Activated T-helper 1 cell treated with anti-CD3 and anti-CD28 coated beads, Interleukin-12 subunit alpha, Interleukin-12 subunit beta, Interleukin-2, Interleukin-4 antibody, amounts not matched to agents 30 ng/mL and 10 ng/mL and 1 ng/mL, durations not matched to agents 14 hours and 24 hours and 36 hours (primary cell): ENCODE measurements at regions of chr10 and their contacts with region 1.

Region 1: DNA sequence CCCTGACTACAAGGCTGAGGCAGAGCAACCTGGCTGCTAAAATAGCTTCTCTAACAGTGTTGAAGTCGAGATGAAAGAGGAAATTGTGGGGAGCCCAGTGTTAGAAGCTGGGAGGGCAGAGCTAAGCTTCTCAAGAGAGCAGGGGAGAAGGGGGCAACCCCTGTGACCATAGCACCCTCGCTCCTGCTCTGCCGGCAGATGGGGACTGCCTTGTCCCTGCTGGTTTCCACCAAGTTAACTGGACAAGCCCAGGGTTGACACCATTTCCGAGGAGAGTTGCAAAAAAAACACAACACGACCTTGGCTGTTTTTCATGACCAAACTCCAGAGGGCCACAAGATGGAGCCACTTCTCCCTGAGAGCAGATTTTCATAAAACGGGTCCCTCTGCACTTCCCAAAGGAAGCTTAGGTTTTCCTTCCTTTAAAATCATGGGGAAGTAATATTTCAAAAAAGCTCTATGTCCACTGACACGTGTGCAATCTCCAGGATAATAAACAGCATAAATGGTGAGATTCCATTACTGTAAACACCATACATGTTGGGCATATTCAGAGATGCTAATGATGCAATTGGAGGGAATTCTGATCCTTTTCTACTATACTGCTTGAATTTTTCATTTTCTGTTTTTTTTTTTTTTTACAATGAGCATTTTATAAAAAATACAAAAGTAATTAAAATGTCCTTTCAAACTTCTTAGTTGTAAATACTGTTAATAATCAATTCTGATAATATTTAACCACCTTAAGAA is 140.4 kb downstream of the PIP4K2A start:
- DNase-seq: no peak
- H3K4me3 Mint-ChIP-seq: no peak overlapping the region
- H3K27ac Mint-ChIP-seq: peak overlapping the region; percentile 44
- H3K4me1 Mint-ChIP-seq: peaks cover 46% of the 10 kb centered on the region
- H3K27me3 Mint-ChIP-seq: no peaks in the 10 kb centered on the region

Region 2: GRCh38 chr10:22054961-22055360 is 519.0 kb before region 1 on chr10:
- intact Hi-C with region 1: no loop called
- DNase-seq: no peak
- H3K4me3 Mint-ChIP-seq: no peak overlapping the region
- H3K27ac Mint-ChIP-seq: no peak overlapping the region
- H3K4me1 Mint-ChIP-seq: no peaks in the 10 kb centered on the region
- H3K27me3 Mint-ChIP-seq: no peaks in the 10 kb centered on the region

Region 3: GRCh38 chr10:22228943-22229801 is 344.8 kb before region 1 on chr10:
- intact Hi-C with region 1: loop called (anchors 5 kb)
- DNase-seq: peak; percentile 77
- H3K4me3 Mint-ChIP-seq: peak overlapping the region; percentile 92
- H3K27ac Mint-ChIP-seq: peak overlapping the region; percentile 98
- H3K4me1 Mint-ChIP-seq: peaks cover 32% of the 10 kb centered on the region
- H3K27me3 Mint-ChIP-seq: peaks cover 11% of the 10 kb centered on the region

Region 4: GRCh38 chr10:22369434-22370072 is 204.4 kb before region 1 on chr10:
- intact Hi-C with region 1: loop called (anchors 2 kb)
- DNase-seq: no peak
- H3K4me3 Mint-ChIP-seq: no peak overlapping the region
- H3K27ac Mint-ChIP-seq: no peak overlapping the region
- H3K4me1 Mint-ChIP-seq: peaks cover 50% of the 10 kb centered on the region
- H3K27me3 Mint-ChIP-seq: no peaks in the 10 kb centered on the region

Region 5: DNA sequence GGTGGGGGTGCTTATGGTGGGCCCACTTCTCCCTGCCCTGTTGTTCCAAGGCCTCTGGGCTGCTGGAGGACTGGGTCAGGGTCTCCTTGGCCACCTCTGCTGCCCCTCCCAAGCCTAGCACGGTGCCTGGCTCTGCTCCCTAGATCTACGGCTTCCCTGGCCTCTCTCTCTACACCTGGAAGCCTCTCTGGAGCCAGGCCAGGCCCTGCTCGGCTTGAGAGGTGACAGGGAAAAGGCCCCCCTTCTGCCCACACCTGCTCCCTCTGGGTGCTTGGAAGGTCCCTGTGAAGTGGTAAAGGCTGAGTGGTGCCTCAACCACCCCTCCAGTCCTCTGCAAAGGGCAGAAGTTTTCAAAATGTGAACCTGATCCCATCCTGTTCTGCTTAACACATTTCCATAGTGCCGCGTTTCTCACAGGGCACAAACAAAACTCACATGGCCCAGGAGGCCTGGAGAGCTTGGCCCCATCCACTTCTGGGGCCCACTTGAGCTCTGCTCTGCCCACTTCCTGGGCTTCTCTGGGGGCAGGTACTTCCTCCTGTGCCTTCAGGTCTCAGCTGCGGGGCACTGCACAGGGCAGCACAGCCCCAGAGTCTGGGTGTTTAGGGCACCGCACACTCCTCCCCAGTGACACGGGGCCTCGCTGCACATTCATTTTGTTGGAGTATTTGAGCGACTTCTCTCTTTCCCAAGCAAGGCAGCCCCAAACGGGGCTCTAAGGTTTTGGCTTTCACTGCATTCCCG is 29.5 kb before region 1 on chr10:
- intact Hi-C with region 1: no loop called
- DNase-seq: no peak
- H3K4me3 Mint-ChIP-seq: no peak overlapping the region
- H3K27ac Mint-ChIP-seq: peak overlapping the region; percentile 4
- H3K4me1 Mint-ChIP-seq: peaks cover 8% of the 10 kb centered on the region
- H3K27me3 Mint-ChIP-seq: no peaks in the 10 kb centered on the region

Region 6: GRCh38 chr10:22611425-22612115 is 37.6 kb after region 1 on chr10:
- intact Hi-C with region 1: loop called (anchors 5 kb)
- DNase-seq: peak; percentile 72
- H3K4me3 Mint-ChIP-seq: peak overlapping the region; percentile 38
- H3K27ac Mint-ChIP-seq: peak overlapping the region; percentile 21
- H3K4me1 Mint-ChIP-seq: peaks cover 90% of the 10 kb centered on the region
- H3K27me3 Mint-ChIP-seq: no peaks in the 10 kb centered on the region

Region 7: DNA sequence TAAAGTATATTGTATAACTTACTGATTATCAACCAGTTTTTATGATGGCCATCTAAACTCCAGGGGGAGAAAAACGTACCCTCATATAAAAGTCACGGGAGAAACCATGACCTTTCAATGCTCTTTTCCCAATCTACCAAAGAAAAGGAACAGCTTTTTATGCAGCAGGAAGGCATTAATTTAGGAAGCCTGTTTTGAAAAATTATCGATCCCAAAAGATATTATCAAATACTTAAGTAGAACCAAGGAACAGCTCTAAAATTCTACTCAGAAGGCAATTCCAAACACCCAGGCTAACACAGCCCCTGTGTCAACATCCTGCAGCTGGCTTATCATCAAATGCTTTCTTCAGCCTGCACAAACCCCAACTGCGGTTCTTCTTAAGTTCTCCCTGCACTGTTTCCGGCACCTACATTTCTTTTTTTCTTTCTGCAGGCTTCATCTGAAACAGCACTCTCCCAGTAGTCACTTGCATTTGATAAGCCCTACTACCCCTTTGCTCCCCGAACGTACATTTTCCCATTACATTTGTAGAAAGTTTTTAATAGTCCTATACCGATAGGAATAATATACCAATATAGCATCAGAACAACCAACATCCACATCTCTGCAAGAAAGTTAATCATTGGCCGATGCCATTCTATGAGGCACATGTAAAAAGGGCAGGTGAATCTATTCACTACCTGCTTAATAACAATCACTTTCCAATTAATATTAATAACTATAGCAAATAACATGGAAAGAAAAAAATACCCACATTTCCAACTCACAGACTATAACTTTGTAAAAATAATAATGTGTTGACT is 92.5 kb after region 1 on chr10:
- intact Hi-C with region 1: loop called (anchors 5 kb)
- DNase-seq: peak; percentile 57
- H3K4me3 Mint-ChIP-seq: peak overlapping the region; percentile 74
- H3K27ac Mint-ChIP-seq: peak overlapping the region; percentile 85
- H3K4me1 Mint-ChIP-seq: peaks cover 66% of the 10 kb centered on the region
- H3K27me3 Mint-ChIP-seq: no peaks in the 10 kb centered on the region